ENCODE measurements at regions of chr20 and their contacts with region 1.

Region 1: DNA sequence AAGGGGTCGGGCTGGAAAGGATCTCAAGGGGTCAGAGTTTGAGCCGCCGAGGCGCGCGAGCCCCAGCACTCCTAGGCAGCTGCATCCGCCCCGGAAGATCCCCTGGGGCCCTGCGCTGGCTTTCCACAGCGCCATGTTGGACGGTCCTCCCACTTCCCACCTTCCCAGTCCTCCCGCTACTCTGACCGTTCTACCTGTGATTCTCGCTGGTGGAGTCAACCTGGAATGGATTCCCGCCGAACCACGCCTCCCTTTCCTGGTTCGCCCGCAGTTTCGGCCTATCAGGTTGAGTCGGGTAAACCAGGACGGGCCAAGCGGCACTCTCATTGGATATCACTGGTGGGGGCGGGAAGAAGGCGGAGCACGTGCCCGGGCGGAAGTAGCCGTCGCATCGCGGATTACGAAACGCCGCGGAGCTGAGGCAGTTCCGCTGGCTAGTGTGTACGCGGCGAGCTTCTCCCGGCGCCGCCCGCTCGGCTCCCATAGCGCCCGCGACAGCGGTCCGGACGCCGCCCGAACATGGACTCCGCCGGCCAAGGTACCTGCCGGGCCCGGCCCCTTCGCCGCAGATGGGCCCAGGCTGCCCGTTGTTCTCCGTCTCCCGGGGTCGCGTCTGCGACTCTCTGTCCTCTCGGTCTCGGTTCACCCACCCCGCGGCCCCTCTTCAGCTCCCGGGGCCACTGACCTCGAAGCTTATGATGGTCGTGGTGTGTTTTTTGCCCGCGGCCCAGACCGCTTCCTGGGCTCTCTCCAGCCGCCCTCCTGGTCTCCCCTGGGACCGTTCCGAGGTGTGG is at the start of gene TPD52L2:
- DNase-seq: peak; percentile 99
- ATAC-seq: peak; percentile 96
- total RNA-seq, gene TPD52L2: 69.0 TPM

Region 2: GRCh38 chr20:63626424-63627128 is 238.5 kb before region 1 on chr20 and contains the start of gene GMEB2:
- intact Hi-C with region 1: no loop called
- DNase-seq: peak; percentile 86
- ATAC-seq: peak; percentile 60
- total RNA-seq, gene GMEB2: 5.5 TPM

Region 3: DNA sequence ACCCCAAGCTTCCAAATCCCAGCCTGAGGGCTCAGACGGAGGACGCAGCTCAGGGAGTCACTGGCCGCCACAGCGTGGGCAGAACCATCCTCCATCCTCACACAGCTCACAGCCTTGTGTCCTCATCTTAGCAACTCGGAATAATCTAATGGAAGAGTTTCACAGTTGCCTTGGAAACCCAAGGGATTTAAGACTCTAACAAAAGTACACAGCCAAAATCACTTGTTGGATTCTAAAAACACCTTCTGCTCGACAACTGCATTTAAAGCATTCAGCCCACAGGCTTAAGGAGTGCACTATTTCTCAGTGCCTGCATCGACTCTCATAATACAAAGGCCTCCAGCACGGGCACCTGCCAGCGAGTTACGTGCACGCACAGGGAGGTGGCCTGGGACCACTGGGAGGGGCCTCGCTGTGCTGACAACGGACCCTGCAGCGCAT is 79.3 kb before region 1 on chr20:
- intact Hi-C with region 1: loop called (anchors 5 kb)
- DNase-seq: peak; percentile 35
- ATAC-seq: no peak

Region 4: DNA sequence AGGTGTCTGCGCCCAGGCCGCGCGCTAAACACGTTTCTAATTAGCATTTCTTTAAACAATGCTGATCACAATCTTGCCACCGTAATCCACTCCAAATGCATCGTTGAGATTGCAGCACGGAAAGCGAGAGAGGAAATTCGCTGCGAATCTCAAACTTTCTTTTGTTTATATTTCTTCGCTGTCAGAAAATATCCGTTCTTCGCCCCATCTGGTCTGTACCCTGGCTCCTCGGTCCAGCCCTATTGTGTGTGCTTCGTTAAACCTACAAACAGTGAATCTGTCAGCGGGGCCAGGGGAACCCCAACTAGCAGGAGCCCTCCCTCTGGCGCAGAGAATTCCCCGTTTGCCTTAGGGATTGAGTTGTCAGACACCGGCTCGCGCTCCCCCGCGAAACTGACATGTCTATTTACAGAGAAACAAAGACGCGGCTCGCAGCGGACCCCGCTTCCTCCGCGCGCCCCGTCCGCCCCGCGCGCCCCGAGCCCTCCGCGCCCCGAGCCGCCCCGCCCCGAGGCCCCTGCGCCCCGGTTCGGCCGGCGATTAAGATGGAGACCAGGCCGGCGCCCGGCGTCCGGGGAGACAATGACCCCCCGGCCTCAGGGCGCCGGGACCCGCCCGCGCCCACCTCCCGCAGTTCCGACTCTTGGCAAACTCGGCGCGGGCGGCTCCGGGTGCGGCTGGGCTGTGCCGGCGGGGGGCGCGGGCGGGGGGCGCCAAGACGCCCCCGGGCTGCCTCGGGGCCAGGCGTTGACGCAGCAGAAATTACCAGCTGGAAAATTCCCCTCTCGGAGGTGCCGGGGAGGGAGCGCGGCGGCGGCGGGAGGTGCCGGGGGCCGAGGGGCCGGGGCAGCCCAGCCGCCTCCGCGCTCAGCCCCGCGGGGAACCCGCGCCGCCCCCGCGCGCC is 34.9 kb before region 1 on chr20:
- intact Hi-C with region 1: loop called (anchors 5 kb)
- DNase-seq: no peak
- ATAC-seq: no peak

Region 5: GRCh38 chr20:63915471-63915870 is 50.4 kb after region 1 on chr20:
- intact Hi-C with region 1: no loop called
- DNase-seq: peak; percentile 79
- ATAC-seq: peak; percentile 91

Measured in Right ventricle myocardium superior (tissue), 1 donor.